RWPE1 (cell line): ENCODE measurements at regions of chr6 and their contacts with region 1.

Region 1: GRCh38 chr6:134882426-134883038 is 67.4 kb downstream of the ALDH8A1 start:
- DNase-seq: peak; percentile 53
- H3K27ac ChIP-seq: no peak overlapping the region
- CTCF ChIP-seq: peak; percentile 94

Region 2: DNA sequence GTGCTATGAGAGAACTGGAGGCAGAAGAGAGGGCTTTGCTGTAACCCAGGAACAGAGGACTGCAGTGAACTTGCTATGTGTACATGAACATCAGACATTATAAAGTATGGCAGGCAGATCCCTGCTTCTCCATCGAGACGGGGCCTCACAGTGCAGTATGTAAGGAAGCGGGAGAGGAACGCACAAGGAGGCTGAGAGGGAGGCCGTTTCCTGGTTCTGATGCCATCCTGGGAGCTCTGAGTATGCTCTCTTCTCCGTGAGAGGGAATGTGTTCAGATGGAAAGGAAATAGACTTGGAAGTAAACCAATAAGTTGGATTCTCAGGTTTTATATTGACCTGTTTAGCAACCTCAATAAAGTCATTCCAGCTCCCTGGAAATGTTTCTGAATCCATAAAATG is 34.5 kb before region 1 on chr6:
- CTCF ChIA-PET with region 1: no interaction called
- POLR2A ChIA-PET with region 1: no interaction called
- DNase-seq: no peak
- H3K27ac ChIP-seq: no peak overlapping the region
- CTCF ChIP-seq: no peak

Region 3: GRCh38 chr6:134938896-134939295 is 56.4 kb after region 1 on chr6:
- CTCF ChIA-PET with region 1: interaction called, 23 read pairs
- POLR2A ChIA-PET with region 1: no interaction called
- DNase-seq: no peak
- H3K27ac ChIP-seq: peak overlapping the region; percentile 6; the same call in 1 of the 2 replicates
- CTCF ChIP-seq: no peak